Activated T-helper 1 cell treated with anti-CD3 and anti-CD28 coated beads, Interleukin-12 subunit alpha, Interleukin-12 subunit beta, Interleukin-2, Interleukin-4 antibody, amounts not matched to agents 30 ng/mL and 10 ng/mL and 1 ng/mL, durations not matched to agents 14 hours and 24 hours and 36 hours (primary cell): ENCODE measurements at regions of chr3 and their contacts with region 1.

Region 1: GRCh38 chr3:46372492-46373359 is 2.0 kb downstream of the CCR5 start:
- DNase-seq: peak; percentile 31
- H3K4me3 Mint-ChIP-seq: peak overlapping the region; percentile 58
- H3K27ac Mint-ChIP-seq: peak overlapping the region; percentile 22
- H3K4me1 Mint-ChIP-seq: peaks cover 84% of the 10 kb centered on the region
- H3K27me3 Mint-ChIP-seq: peaks cover 6% of the 10 kb centered on the region

Region 2: DNA sequence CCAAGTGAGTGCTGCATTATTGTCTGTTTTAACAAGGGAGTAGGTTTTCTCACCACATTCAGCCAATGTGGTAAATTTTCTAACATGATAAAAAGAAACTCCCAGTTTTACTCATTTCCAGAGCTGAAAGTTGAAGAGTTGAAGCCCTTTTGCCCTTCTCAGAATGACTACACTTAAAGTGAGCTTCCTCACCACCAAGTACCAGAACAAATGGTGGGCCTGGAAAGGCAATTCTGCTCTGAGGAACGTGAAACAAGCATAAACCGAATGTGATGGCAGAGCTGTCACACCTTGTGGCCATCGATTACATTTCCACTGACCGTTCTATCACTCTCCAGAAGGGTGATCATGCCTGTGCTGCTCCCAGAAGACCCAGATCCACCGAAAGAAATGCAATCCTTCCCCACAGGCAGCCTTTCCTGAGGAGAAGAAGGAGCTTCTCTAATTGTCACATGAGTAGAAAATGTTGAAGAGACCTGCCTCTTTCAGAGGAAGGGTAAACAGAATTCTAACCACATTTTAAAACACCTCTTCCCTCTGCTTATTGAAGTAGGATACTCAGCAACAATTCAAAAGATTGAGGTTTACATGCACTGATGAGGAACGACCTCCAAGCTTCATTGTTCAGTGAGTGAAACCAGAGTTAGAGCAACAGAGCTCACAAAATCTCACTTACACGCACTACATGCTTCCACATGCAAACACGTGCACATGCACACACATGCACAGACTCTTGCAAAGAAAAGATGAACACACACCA is 507.8 kb before region 1 on chr3:
- intact Hi-C with region 1: loop called (anchors 1 kb)
- DNase-seq: peak; percentile 41
- H3K4me3 Mint-ChIP-seq: peak overlapping the region; percentile 55
- H3K27ac Mint-ChIP-seq: peak overlapping the region; percentile 42
- H3K4me1 Mint-ChIP-seq: peaks cover 53% of the 10 kb centered on the region
- H3K27me3 Mint-ChIP-seq: peaks cover 31% of the 10 kb centered on the region

Region 3: GRCh38 chr3:46089237-46090011 is 283.3 kb before region 1 on chr3:
- intact Hi-C with region 1: loop called (anchors 2 kb)
- DNase-seq: no peak
- H3K4me3 Mint-ChIP-seq: no peak overlapping the region
- H3K27ac Mint-ChIP-seq: peak overlapping the region; percentile 27
- H3K4me1 Mint-ChIP-seq: peaks cover 67% of the 10 kb centered on the region
- H3K27me3 Mint-ChIP-seq: peaks cover 16% of the 10 kb centered on the region

Region 4: DNA sequence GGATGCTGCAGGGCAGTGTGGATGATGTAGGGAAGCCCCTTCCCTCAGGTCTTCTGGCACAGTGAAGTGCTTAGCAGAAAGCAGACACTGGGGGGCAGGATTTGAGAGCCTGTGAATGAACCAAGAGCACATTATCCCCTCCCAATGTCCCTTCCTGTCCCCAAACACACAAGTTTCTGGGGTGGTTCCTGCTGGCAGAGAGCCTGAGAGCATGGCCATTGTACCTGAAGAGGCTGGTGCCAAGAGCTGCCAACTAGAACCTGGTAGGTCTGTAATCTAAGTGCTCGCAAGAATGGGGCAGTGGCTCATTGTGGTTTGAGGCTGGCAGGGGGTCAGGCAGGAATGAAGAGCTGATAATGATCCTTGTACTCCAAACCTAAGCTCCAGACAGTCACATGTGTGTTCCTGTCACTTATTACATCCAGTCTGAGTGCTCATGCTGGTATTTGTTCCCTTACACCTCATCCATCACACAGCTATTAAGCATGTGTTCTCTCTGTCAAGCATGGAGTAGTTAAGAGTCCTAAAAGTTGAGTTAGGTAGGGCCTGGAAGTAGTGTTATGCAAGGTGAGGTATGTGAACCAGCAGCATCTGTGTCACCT is 157.9 kb before region 1 on chr3:
- intact Hi-C with region 1: loop called (anchors 1 kb)
- DNase-seq: no peak
- H3K4me3 Mint-ChIP-seq: no peak overlapping the region
- H3K27ac Mint-ChIP-seq: no peak overlapping the region
- H3K4me1 Mint-ChIP-seq: peaks cover 40% of the 10 kb centered on the region
- H3K27me3 Mint-ChIP-seq: no peaks in the 10 kb centered on the region

Region 5: GRCh38 chr3:46276502-46277099 is 96.1 kb before region 1 on chr3:
- intact Hi-C with region 1: loop called (anchors 1 kb)
- DNase-seq: peak; percentile 68
- H3K4me3 Mint-ChIP-seq: no peak overlapping the region
- H3K27ac Mint-ChIP-seq: peak overlapping the region; percentile 21
- H3K4me1 Mint-ChIP-seq: peaks cover 62% of the 10 kb centered on the region
- H3K27me3 Mint-ChIP-seq: peaks cover 11% of the 10 kb centered on the region

Region 6: GRCh38 chr3:46359733-46360493 is 12.8 kb before region 1 on chr3:
- intact Hi-C with region 1: loop called (anchors 1 kb)
- DNase-seq: no peak
- H3K4me3 Mint-ChIP-seq: no peak overlapping the region
- H3K27ac Mint-ChIP-seq: peak overlapping the region; percentile 41
- H3K4me1 Mint-ChIP-seq: peaks cover 79% of the 10 kb centered on the region
- H3K27me3 Mint-ChIP-seq: peaks cover 16% of the 10 kb centered on the region

Region 7: GRCh38 chr3:46484911-46485778 is 112.4 kb after region 1 on chr3:
- intact Hi-C with region 1: no loop called
- DNase-seq: no peak
- H3K4me3 Mint-ChIP-seq: no peak overlapping the region
- H3K27ac Mint-ChIP-seq: no peak overlapping the region
- H3K4me1 Mint-ChIP-seq: peaks cover 9% of the 10 kb centered on the region
- H3K27me3 Mint-ChIP-seq: peaks cover 13% of the 10 kb centered on the region